Lower leg skin (tissue), 4 donors: ENCODE measurements at regions of chr5 and their contacts with region 1.

Region 1: DNA sequence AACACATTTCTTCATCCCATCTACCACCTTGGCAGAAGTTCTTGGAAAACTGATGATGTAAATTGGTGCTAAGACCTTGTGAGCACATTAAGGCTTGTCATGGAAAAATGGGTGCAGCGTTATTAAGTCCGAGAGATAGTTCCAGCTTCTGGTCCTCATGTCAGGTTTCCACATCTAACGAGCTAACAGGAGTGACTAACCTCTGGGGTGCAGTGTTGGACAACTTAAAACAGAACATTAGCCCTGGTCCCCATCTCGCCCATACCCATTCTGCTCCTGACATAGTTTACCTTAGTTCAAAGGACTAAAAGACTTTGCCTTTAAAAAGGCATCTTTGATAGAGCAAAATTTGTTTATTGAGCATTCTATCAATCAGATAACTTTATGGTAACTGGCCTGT is 128.0 kb downstream of the SLC1A3 start:
- DNase-seq: no peak
- H3K4me3 ChIP-seq: no peak overlapping the region
- CTCF ChIP-seq: no peak
- POLR2A ChIP-seq: no peak

Region 2: GRCh38 chr5:34941936-34942335 is 1792.5 kb before region 1 on chr5:
- intact Hi-C with region 1: loop called (anchors 5 kb)
- DNase-seq: no peak
- H3K4me3 ChIP-seq: no peak overlapping the region
- CTCF ChIP-seq: no peak
- POLR2A ChIP-seq: no peak